ENCODE measurements at regions of chr14 and their contacts with region 1.

Region 1: DNA sequence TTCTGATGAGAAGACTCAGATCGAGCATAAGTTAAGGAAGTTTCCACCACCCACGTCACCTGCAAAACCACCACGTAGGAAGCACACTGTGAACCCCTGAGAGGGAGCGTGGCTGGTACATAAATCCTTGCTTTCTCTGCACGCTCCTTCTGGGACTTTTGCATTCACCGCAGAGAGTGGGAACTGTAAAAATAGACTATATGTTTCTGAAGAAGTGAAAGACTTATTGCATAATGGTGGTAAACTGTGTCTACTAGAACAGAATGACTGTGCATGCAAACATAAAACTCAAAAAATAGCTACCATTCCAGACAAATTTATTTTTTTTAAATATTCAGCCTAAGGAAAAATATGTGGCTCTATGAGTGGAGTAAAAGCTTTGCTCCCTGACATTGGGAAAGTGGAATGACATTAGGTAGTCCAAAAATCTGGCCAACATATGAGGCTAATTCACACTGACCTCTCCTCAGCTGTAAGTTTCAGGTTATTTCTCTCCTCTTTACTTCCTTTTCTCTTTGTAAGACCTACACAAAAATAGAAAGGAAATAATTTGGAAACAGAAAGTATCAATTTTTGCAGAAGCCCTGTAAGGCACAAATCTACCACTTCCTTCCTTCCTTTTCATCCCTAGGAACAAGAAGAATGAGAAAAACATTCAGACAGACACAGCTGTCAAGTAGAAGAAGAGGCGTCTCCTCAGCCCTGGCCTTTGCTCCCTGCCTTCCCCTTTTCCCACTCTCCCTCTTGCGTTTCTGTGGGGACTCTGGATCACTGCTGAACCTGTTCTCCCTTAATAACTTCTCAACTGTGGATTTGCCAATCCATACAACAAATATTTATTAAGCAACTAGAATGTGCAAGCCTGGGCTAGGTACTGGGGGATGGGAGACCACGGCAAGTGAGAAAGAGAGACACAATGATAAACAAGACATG is 264.3 kb upstream of the FOXN3 start:
- DNase-seq: peak; percentile 26
- H3K4me3 Mint-ChIP-seq: peak overlapping the region; percentile 53
- H3K27ac Mint-ChIP-seq: peak overlapping the region; percentile 88
- H3K4me1 Mint-ChIP-seq: peaks cover 38% of the 10 kb centered on the region
- H3K27me3 Mint-ChIP-seq: no peaks in the 10 kb centered on the region

Region 2: DNA sequence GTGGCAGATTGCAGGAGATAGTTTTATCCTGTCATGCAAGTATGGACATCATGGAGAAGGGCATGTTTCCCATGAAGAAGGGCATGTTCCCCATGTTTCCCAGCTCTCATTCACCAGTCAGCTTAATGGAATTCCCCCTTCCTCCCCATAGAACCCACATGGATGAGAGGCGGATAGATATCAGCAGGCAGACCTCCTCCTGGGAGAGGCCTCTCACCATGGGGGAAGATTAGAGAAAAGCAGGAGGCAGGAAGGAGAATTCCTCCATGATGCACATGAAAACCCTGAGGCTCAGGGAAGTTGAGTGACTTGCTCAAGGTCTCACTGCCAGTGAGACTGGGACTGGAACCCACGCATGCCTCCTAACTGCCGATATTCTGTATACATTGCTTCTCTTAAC is 171.5 kb before region 1 on chr14:
- intact Hi-C with region 1: loop called (anchors 2 kb)
- DNase-seq: no peak
- H3K4me3 Mint-ChIP-seq: peak overlapping the region; percentile 74
- H3K27ac Mint-ChIP-seq: peak overlapping the region; percentile 96
- H3K4me1 Mint-ChIP-seq: peaks cover 58% of the 10 kb centered on the region
- H3K27me3 Mint-ChIP-seq: no peaks in the 10 kb centered on the region

Region 3: GRCh38 chr14:89641495-89642175 is 39.7 kb before region 1 on chr14:
- intact Hi-C with region 1: loop called (anchors 1 kb)
- DNase-seq: peak; percentile 42
- H3K4me3 Mint-ChIP-seq: peak overlapping the region; percentile 50
- H3K27ac Mint-ChIP-seq: peak overlapping the region; percentile 93
- H3K4me1 Mint-ChIP-seq: peaks cover 65% of the 10 kb centered on the region
- H3K27me3 Mint-ChIP-seq: no peaks in the 10 kb centered on the region

Region 4: DNA sequence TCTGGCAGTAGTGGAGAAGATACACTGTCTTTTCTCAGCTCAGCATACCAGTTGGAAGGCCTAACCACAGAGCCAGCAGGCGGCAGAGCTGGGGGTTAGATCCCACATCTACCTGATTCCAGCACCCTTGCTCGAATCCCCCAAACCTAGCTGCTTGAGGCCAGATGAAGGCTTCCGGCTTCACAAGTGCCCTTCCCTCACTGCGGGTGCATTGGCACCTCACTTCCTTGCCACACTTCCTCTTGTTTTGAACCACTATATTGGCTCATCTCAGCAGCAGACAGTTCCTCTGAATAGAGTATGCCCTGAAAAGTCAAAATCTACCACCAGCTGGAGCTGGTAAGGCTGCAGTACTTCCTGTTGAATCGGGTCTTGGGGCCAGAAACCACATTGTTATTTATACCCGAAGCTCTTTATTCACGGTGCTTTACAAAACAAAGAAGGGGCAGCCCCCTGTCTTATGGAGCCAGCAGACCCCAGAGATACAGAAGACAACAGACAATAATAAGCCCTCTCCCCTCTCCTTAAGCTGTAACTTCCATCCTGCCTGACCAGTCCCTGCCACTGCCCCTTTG is 39.5 kb after region 1 on chr14:
- intact Hi-C with region 1: loop called (anchors 2 kb)
- DNase-seq: peak; percentile 67
- H3K4me3 Mint-ChIP-seq: peak overlapping the region; percentile 54
- H3K27ac Mint-ChIP-seq: peak overlapping the region; percentile 96
- H3K4me1 Mint-ChIP-seq: peaks cover 64% of the 10 kb centered on the region
- H3K27me3 Mint-ChIP-seq: no peaks in the 10 kb centered on the region